H1 (cell line): ENCODE measurements at regions of chr3 and their contacts with region 1.

Region 1: DNA sequence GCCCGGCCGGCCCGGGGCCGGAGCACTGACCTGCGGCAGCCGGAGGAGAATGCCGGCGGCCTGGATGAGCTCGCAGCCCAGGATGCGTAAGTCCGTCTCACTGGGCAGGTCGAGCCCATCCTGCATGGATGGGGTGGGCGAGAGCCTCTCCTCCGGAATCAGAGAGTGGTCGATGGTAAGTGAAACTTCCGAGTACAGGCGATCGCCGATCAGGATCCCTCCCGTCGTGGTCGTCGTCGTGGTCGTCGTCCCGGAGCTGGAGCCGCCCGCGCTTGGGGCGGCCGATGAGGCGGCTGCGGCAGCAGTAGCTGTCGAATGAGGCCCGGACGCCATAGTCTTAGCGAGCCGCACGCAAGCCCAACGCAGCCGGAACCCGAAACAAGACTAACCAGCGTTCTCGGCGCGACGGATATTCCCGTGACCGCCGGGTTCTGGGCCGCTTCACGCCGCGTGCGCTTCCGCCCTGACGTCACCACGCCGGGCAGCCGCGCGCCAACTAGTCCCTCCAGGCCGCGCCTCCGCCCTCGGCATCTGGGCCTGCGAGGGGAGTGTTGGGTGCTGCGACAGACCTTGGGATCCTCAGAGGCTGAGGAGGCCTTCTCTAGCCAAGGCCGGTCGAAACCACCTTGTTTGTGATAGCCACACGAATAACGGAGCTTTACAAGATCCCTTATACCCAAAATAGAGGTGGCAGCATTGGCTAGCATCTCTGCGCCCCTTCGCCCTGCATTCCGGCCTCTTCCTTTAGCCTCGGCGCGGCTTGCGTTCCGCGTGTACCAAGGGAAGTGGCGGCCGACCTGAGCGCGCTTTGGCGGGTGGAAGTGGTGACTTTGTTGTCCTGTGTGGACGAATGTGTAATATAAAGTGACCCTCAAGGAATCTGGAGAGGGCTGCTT is at the start of gene CCNL1:
- DNase-seq: peak; percentile 76 to 94
- H3K4me3 ChIP-seq: peak within 1 kb of the TSS; percentile 60 to 91 (median 88)
- H3K27ac ChIP-seq: peak within 1 kb of the TSS; percentile 98
- H3K4me1 ChIP-seq: peaks cover 0 to 4% (median 2%) of the 10 kb centered on the region in 4 experiments; a peak in 6 of 7 replicates
- H3K27me3 ChIP-seq: no peaks in the 10 kb centered on the region
- CTCF ChIP-seq: no peak
- EP300 ChIP-seq: peak in 1 of 2 experiments; percentile 89; a peak in 1 of 3 replicates
- POLR2A ChIP-seq: peak; percentile 98 to 99
- RAD21 ChIP-seq: peak in 1 of 2 experiments; percentile 17; a peak in 1 of 4 replicates
- total RNA-seq, gene CCNL1: 61.2 and 68.6 TPM in 2 replicates

Region 2: GRCh38 chr3:157045238-157045850 is 114.7 kb before region 1 on chr3:
- CTCF ChIA-PET with region 1: no interaction called
- POLR2A ChIA-PET with region 1: no interaction called
- DNase-seq: peak in 1 of 2 experiments; percentile 52
- H3K4me3 ChIP-seq: peak overlapping the region in 1 of 4 experiments; percentile 10; a peak in 2 of 8 replicates
- H3K27ac ChIP-seq: no peak overlapping the region
- H3K4me1 ChIP-seq: peaks cover 0 to 2% (median 0%) of the 10 kb centered on the region in 4 experiments; a peak in 2 of 7 replicates
- H3K27me3 ChIP-seq: peaks cover 0 to 1% (median 0%) of the 10 kb centered on the region in 4 experiments; a peak in 3 of 7 replicates
- CTCF ChIP-seq: no peak
- EP300 ChIP-seq: no peak
- POLR2A ChIP-seq: no peak
- RAD21 ChIP-seq: no peak

Region 3: GRCh38 chr3:157136647-157137387 is 23.2 kb before region 1 on chr3:
- CTCF ChIA-PET with region 1: interaction called, 16 read pairs
- POLR2A ChIA-PET with region 1: interaction called, 50 read pairs
- DNase-seq: no peak
- H3K4me3 ChIP-seq: no peak overlapping the region
- H3K27ac ChIP-seq: no peak overlapping the region
- H3K4me1 ChIP-seq: no peaks in the 10 kb centered on the region
- H3K27me3 ChIP-seq: no peaks in the 10 kb centered on the region
- CTCF ChIP-seq: no peak
- EP300 ChIP-seq: no peak
- POLR2A ChIP-seq: no peak
- RAD21 ChIP-seq: no peak

Region 4: GRCh38 chr3:157148196-157148889 is 11.7 kb before region 1 on chr3:
- CTCF ChIA-PET with region 1: no interaction called
- POLR2A ChIA-PET with region 1: interaction called, 50 read pairs
- DNase-seq: no peak
- H3K4me3 ChIP-seq: no peak overlapping the region
- H3K27ac ChIP-seq: no peak overlapping the region
- H3K4me1 ChIP-seq: no peaks in the 10 kb centered on the region
- H3K27me3 ChIP-seq: peaks cover 0 to 1% (median 0%) of the 10 kb centered on the region in 4 experiments; a peak in 1 of 7 replicates
- CTCF ChIP-seq: no peak
- EP300 ChIP-seq: no peak
- POLR2A ChIP-seq: peak in 1 of 2 experiments; percentile 63; a peak in 2 of 3 replicates
- RAD21 ChIP-seq: no peak

Region 5: DNA sequence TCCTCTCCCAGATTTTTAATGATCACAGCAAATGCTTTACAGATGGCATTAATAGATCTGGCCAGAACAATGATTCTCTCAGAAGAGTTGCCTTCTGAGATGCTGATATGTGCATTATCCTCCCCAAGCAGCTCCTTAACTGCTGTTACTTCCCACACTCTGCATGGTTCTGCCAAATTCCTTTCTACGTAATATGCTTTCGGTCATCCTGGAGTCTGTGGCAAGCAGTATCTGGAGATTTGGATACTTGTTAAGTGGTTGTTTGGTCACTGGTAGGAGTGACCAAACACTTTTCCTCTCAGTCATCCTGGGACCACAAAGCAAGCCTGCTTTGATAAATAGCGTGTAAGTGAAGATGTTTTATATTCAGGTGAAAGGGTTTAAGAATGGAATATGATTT is 71.1 kb after region 1 on chr3:
- CTCF ChIA-PET with region 1: interaction called, 4 read pairs
- POLR2A ChIA-PET with region 1: interaction called, 11 read pairs
- DNase-seq: no peak
- H3K4me3 ChIP-seq: no peak overlapping the region
- H3K27ac ChIP-seq: no peak overlapping the region
- H3K4me1 ChIP-seq: no peaks in the 10 kb centered on the region
- H3K27me3 ChIP-seq: no peaks in the 10 kb centered on the region
- CTCF ChIP-seq: no peak
- EP300 ChIP-seq: no peak
- POLR2A ChIP-seq: no peak
- RAD21 ChIP-seq: no peak

Region 6: GRCh38 chr3:157499342-157499963 is 339.4 kb after region 1 on chr3:
- CTCF ChIA-PET with region 1: interaction called, 5 read pairs
- POLR2A ChIA-PET with region 1: interaction called, 16 read pairs
- DNase-seq: peak; percentile 74 to 83
- H3K4me3 ChIP-seq: peak overlapping the region; percentile 48 to 55 (median 50)
- H3K27ac ChIP-seq: peak overlapping the region; percentile 79
- H3K4me1 ChIP-seq: peaks cover 4 to 21% (median 18%) of the 10 kb centered on the region in 4 experiments; a peak in 5 of 7 replicates
- H3K27me3 ChIP-seq: no peaks in the 10 kb centered on the region
- CTCF ChIP-seq: no peak
- EP300 ChIP-seq: peak in 1 of 2 experiments; percentile 65; a peak in 1 of 3 replicates
- POLR2A ChIP-seq: peak in 1 of 2 experiments; percentile 91; a peak in 2 of 3 replicates
- RAD21 ChIP-seq: peak in 1 of 2 experiments; percentile 6; a peak in 2 of 4 replicates